Heart left ventricle (tissue), 16 donors: ENCODE measurements at regions of chr6 and their contacts with region 1.

Region 1: DNA sequence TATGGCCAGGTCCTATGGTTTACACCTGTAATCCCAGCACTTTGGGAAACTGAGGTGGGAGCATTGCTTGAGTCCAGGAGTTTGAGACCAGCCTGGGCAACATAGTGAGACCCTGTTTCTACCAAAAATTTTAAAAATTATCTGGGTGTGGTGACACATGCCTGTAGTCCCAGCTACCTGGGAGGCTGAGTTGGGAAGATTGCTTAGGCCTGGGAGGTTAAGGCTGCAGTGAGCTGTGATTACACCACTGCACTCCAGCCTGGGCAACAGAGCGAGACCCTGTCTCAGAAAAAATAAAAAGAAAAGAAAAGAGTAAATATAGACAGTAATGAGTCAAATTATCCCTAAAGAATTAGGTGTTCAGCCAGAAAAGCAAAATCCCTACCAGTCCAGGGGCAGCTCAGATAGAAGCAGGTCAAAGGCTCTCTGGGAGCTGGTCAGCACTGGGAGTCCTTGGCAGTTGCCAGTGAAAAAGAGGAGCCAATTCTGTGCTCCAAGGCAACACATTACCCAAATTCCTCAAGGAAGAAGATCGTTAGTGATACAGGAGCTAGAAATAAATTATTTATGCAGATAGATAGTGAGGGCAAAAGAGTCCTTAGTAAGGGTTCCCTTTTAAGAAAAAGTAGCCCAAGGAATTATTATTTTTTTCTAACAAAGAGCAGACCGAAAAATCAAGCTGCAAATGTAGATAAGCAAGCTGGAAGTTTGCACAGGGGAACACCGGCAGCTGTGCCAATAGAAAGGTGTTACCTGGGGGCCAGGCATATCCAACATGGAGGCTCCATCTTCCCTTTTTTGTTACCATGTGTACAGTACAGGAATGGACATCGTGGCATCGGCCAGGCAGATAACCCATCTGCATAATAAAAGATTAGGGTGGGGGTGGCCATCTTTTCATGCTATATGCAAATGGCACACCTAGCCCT is 31.4 kb upstream of the SEC63 start:
- DNase-seq: no peak
- ATAC-seq: no peak
- H3K4me3 ChIP-seq: no peak overlapping the region
- H3K27ac ChIP-seq: no peak overlapping the region
- H3K4me1 ChIP-seq: no peaks in the 10 kb centered on the region
- H3K27me3 ChIP-seq: no peaks in the 10 kb centered on the region
- CTCF ChIP-seq: no peak
- POLR2A ChIP-seq: no peak

Region 2: DNA sequence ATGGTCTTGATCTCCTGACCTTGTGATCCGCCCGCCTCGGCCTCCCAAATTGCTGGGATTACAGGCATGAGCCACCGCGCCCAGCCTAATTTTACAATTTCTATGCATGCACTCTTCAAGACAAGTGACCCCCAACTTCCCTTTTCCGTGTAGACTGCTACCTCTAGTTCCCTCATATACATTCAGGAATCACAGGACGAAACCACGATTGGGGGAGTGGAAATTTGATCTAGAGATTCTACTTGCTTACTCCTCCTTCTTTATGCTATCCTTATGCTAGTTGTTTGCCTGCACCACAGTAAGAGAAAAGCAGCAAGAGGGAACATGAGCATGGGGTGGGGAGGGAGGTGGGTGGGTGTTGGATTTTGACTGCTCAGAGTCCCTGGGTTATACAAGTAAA is 50.3 kb after region 1 on chr6:
- intact Hi-C with region 1: loop called in 1 of 10 experiments (anchors 10 kb)
- DNase-seq: no peak
- ATAC-seq: no peak
- H3K4me3 ChIP-seq: no peak overlapping the region
- H3K27ac ChIP-seq: no peak overlapping the region
- H3K4me1 ChIP-seq: no peaks in the 10 kb centered on the region
- H3K27me3 ChIP-seq: no peaks in the 10 kb centered on the region
- CTCF ChIP-seq: no peak
- POLR2A ChIP-seq: no peak